Sciatic nerve (tissue), 2 donors: ENCODE measurements at regions of chr15 and their contacts with region 1.

Region 1: DNA sequence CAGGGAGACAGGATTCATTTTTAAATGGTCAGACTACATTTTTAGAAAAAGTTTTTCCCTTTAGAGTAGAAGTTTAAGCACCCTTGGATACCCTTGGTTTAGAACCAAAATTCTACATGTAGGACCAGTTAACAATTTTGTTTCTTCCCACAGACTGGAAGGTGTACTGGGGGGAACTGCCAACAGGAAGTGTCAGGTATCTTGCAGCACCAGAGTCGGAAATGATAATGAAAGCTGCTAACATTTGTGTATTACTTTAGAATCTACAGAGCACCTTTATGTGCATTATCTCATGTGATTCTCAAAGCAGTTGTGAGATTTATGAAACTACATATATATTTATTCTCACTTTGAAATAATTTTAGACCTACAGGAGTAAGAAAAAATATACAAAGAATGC is 21.5 kb downstream of the SPRED1 start:
- DNase-seq: no peak
- ATAC-seq: no peak

Region 2: GRCh38 chr15:37490707-37491106 is 783.4 kb before region 1 on chr15:
- intact Hi-C with region 1: no loop called
- DNase-seq: no peak
- ATAC-seq: no peak

Region 3: DNA sequence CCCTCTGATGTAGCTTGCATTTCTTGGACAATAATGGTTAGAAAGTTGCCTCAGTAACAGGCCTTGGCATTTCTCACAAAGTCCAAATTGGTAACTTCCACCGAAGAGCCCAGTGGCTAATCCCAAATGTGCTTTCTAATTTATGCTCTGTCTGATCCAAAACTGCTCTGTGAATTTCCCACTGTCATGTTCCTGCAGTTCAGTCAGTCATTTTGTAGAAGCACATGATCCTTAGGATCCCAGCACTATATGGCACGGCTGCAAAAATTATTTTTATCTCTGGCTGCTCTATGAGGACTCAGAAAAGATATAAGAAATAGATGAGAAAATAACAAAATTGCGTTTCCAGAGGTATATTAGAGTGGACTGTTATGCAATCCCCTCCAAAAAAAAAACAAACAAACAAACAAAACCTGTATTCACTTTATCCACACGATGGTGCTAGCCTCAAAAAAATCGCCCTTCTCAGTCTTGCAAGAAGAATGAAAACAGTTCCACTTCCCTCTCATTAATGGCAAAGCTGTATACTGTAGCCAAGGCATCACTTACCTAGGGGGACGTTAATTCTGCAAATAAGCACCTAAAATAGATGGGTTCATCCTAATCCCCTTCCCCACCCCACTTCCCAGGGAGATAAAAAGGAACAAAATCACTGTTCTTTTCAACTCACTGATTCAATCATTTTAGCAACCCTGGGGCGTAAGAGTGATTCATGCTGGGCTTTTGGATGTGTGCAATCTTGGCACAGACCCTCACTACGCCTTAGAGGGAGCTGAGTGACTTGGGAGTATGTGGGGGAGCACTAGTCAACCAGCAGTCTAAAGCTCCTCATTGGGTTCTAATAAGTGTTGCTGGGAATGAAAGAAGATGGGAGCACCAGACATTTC is 278.4 kb before region 1 on chr15:
- intact Hi-C with region 1: no loop called
- DNase-seq: no peak
- ATAC-seq: peak; percentile 92

Region 4: GRCh38 chr15:39638041-39638440 is 1363.9 kb after region 1 on chr15:
- intact Hi-C with region 1: loop called (anchors 5 kb)
- DNase-seq: no peak
- ATAC-seq: no peak